Heart right ventricle (tissue), 16 donors: ENCODE measurements at regions of chr3 and their contacts with region 1.

Region 1: GRCh38 chr3:96548073-96548472 is 266.3 kb upstream of the EPHA6 start:
- DNase-seq: no peak
- ATAC-seq: no peak
- H3K4me3 ChIP-seq: no peak overlapping the region
- H3K27ac ChIP-seq: no peak overlapping the region
- H3K4me1 ChIP-seq: no peaks in the 10 kb centered on the region
- H3K27me3 ChIP-seq: no peaks in the 10 kb centered on the region
- CTCF ChIP-seq: no peak

Region 2: DNA sequence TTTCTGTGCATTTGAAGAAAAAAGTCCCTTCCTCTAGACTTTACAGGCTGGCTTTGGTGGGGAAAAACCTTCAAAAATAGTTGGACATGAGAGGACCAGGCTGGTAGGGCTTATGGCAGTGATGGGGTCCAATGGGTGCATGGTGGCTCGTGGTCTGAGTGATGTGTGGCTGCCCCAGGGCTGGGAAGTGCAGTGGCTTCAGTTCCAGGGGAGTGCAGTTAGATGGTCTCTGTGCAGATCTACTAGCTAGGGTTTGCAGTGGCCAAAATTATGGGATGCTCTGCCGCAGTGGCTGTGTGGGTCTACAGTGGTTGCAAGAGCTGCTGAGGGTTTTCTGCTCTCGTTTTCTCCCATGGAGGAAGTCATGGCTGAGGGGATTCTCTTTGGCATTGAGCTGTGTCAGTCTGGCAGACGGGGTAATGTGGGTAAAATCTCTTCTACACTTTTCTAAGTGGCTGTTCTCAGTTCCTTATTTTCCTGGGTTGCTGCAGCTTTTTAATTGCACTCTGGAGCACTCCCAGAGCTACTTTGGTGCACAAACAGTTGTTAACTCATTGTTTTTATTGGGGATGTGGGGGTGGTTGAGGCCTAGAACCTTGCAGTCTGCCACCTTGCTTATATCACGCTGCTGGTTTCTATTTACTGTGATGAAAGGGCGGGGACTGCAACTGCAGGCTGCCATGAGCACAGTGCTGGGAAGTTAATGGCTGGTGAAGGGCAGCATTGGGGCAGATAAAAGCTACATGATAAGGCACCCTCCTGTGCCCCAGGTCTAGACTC is 1160.6 kb before region 1 on chr3:
- intact Hi-C with region 1: loop called in 1 of 10 experiments (anchors 5 kb)
- DNase-seq: no peak
- ATAC-seq: no peak
- H3K4me3 ChIP-seq: no peak overlapping the region
- H3K27ac ChIP-seq: no peak overlapping the region
- H3K4me1 ChIP-seq: no peaks in the 10 kb centered on the region
- H3K27me3 ChIP-seq: no peaks in the 10 kb centered on the region
- CTCF ChIP-seq: no peak

Region 3: DNA sequence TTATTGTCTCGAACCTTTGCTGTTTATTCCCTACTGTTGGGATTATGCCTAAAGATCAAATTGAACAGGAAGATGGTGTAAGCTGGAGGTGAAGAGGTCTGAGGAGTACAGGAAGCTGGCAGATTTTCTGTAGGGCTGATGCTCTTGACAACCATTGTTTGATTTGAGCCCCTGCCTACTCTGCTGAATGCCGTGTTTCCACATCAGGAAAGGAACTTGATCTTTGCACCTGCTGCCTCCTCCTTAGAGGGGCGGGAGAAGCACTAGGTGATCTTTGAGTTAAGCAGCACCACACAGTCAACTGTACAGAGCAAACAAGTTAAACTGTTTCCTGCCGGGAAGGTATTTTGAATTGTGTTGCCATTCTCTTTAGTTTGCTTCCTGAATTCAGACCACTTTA is 98.3 kb before region 1 on chr3:
- intact Hi-C with region 1: no loop called
- DNase-seq: no peak
- ATAC-seq: no peak
- H3K4me3 ChIP-seq: no peak overlapping the region
- H3K27ac ChIP-seq: no peak overlapping the region
- H3K4me1 ChIP-seq: no peaks in the 10 kb centered on the region
- H3K27me3 ChIP-seq: no peaks in the 10 kb centered on the region
- CTCF ChIP-seq: no peak

Region 4: GRCh38 chr3:96584066-96584465 is 36.0 kb after region 1 on chr3:
- intact Hi-C with region 1: no loop called
- DNase-seq: no peak
- ATAC-seq: no peak
- H3K4me3 ChIP-seq: no peak overlapping the region
- H3K27ac ChIP-seq: no peak overlapping the region
- H3K4me1 ChIP-seq: no peaks in the 10 kb centered on the region
- H3K27me3 ChIP-seq: no peaks in the 10 kb centered on the region
- CTCF ChIP-seq: no peak

Region 5: GRCh38 chr3:97001611-97002010 is 453.5 kb after region 1 on chr3:
- intact Hi-C with region 1: no loop called
- DNase-seq: no peak
- ATAC-seq: no peak
- H3K4me3 ChIP-seq: no peak overlapping the region
- H3K27ac ChIP-seq: no peak overlapping the region
- H3K4me1 ChIP-seq: no peaks in the 10 kb centered on the region
- H3K27me3 ChIP-seq: no peaks in the 10 kb centered on the region
- CTCF ChIP-seq: no peak